Endothelial cell of umbilical vein (primary cell): ENCODE measurements at regions of chr13 and their contacts with region 1.

Region 1: GRCh38 chr13:44435142-44435982 is 61.7 kb downstream of the SERP2 start:
- DNase-seq: peak; percentile 99
- H3K4me3 ChIP-seq: peak overlapping the region; percentile 86 to 99 (median 99)
- H3K27ac ChIP-seq: peak overlapping the region; percentile 95
- H3K4me1 ChIP-seq: peaks cover 16% of the 10 kb centered on the region
- H3K27me3 ChIP-seq: no peaks in the 10 kb centered on the region
- CTCF ChIP-seq: no peak
- POLR2A ChIP-seq: no peak

Region 2: GRCh38 chr13:44050450-44051063 is 384.8 kb before region 1 on chr13:
- CTCF ChIA-PET with region 1: interaction called, 28 read pairs
- POLR2A ChIA-PET with region 1: interaction called, 5 read pairs
- dilution Hi-C with region 1: no loop called
- intact Hi-C with region 1: loop called (anchors 1 kb)
- DNase-seq: peak; percentile 49
- H3K4me3 ChIP-seq: no peak overlapping the region
- H3K27ac ChIP-seq: no peak overlapping the region
- H3K4me1 ChIP-seq: no peaks in the 10 kb centered on the region
- H3K27me3 ChIP-seq: peaks cover 7 to 18% of the 10 kb centered on the region in 2 experiments
- CTCF ChIP-seq: peak; percentile 42 to 49
- POLR2A ChIP-seq: no peak

Region 3: DNA sequence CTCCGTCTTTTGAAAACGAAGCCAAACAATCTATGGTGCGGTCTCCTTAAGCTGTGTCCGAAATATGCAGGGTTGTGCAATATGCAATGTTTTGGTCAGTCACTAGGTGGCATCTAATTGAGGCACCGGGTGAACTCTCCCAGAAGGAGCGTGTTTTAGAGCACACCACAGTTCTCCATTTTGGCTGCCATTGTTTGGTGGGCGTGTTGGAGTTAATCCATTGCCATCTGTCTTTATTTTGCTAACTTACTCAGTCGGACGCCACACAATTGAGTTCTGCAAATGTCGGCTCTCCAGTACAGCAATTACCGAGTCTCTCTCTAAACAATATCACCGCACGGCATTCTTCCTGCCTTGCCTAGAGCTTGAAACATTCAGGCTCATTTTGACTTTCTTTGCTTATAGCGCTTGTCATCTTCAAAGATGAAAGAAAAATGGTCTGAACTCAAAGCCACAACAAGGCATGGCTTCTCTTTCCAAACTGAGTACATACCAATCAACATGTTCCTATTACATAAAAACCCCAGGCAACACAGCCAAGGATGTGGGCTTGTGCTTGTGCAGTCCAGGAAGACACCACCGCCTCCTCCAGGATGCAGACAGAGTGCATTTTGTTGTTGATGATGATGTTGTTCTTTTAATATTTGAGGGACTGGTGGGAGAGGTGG is 243.7 kb before region 1 on chr13:
- CTCF ChIA-PET with region 1: interaction called, 121 read pairs
- POLR2A ChIA-PET with region 1: interaction called, 15 read pairs
- dilution Hi-C with region 1: no loop called
- intact Hi-C with region 1: loop called (anchors 1 kb)
- DNase-seq: peak; percentile 71
- H3K4me3 ChIP-seq: no peak overlapping the region
- H3K27ac ChIP-seq: no peak overlapping the region
- H3K4me1 ChIP-seq: no peaks in the 10 kb centered on the region
- H3K27me3 ChIP-seq: no peaks in the 10 kb centered on the region
- CTCF ChIP-seq: peak; percentile 46 to 71
- POLR2A ChIP-seq: no peak

Region 4: GRCh38 chr13:44243198-44243857 is 192.0 kb before region 1 on chr13:
- CTCF ChIA-PET with region 1: interaction called, 43 read pairs
- POLR2A ChIA-PET with region 1: interaction called, 21 read pairs
- dilution Hi-C with region 1: no loop called
- intact Hi-C with region 1: loop called (anchors 1 kb)
- DNase-seq: peak; percentile 92
- H3K4me3 ChIP-seq: no peak overlapping the region
- H3K27ac ChIP-seq: peak overlapping the region; percentile 69
- H3K4me1 ChIP-seq: peaks cover 11% of the 10 kb centered on the region
- H3K27me3 ChIP-seq: no peaks in the 10 kb centered on the region
- CTCF ChIP-seq: peak; percentile 53 to 73
- POLR2A ChIP-seq: no peak

Region 5: GRCh38 chr13:44364348-44365049 is 70.9 kb before region 1 on chr13:
- CTCF ChIA-PET with region 1: interaction called, 6 read pairs
- POLR2A ChIA-PET with region 1: interaction called, 4 read pairs
- dilution Hi-C with region 1: no loop called
- intact Hi-C with region 1: loop called (anchors 1 kb)
- DNase-seq: peak; percentile 90
- H3K4me3 ChIP-seq: no peak overlapping the region
- H3K27ac ChIP-seq: peak overlapping the region; percentile 89
- H3K4me1 ChIP-seq: peaks cover 51% of the 10 kb centered on the region
- H3K27me3 ChIP-seq: no peaks in the 10 kb centered on the region
- CTCF ChIP-seq: no peak
- POLR2A ChIP-seq: peak; percentile 25

Region 6: GRCh38 chr13:44470638-44471562 is 35.5 kb after region 1 on chr13:
- CTCF ChIA-PET with region 1: interaction called, 5 read pairs
- POLR2A ChIA-PET with region 1: interaction called, 6 read pairs
- dilution Hi-C with region 1: no loop called
- intact Hi-C with region 1: loop called (anchors 1 kb)
- DNase-seq: peak; percentile 46
- H3K4me3 ChIP-seq: peak overlapping the region in 1 of 3 experiments; percentile 50
- H3K27ac ChIP-seq: peak overlapping the region; percentile 51
- H3K4me1 ChIP-seq: peaks cover 29% of the 10 kb centered on the region
- H3K27me3 ChIP-seq: no peaks in the 10 kb centered on the region
- CTCF ChIP-seq: peak; percentile 6 to 20
- POLR2A ChIP-seq: no peak

Region 7: DNA sequence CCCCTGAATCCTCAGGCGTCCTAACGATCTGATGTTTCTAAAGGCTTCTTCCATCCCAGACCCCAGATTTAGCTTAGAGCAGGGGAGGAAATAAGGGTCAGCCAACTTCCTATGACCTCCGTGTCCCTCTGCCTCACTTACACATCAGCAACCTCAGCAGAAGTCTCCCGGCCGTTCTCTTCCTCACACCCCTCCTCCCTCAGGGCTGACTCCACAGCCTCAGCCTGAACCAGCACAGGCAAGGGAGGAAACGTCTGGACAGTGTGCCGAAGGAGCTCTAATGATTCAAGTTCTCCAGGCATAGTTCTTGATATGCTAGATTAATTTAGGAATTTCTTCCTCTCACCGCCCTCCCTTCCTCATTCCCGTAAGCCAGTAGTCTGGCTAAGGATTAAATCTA is 432.5 kb after region 1 on chr13:
- CTCF ChIA-PET with region 1: no interaction called
- POLR2A ChIA-PET with region 1: no interaction called
- dilution Hi-C with region 1: no loop called
- intact Hi-C with region 1: no loop called
- DNase-seq: peak; percentile 23
- H3K4me3 ChIP-seq: no peak overlapping the region
- H3K27ac ChIP-seq: no peak overlapping the region
- H3K4me1 ChIP-seq: peaks cover 8% of the 10 kb centered on the region
- H3K27me3 ChIP-seq: no peaks in the 10 kb centered on the region
- CTCF ChIP-seq: no peak
- POLR2A ChIP-seq: no peak